Endothelial cell of umbilical vein (primary cell): ENCODE measurements at regions of chr17 and their contacts with region 1.

Region 1: DNA sequence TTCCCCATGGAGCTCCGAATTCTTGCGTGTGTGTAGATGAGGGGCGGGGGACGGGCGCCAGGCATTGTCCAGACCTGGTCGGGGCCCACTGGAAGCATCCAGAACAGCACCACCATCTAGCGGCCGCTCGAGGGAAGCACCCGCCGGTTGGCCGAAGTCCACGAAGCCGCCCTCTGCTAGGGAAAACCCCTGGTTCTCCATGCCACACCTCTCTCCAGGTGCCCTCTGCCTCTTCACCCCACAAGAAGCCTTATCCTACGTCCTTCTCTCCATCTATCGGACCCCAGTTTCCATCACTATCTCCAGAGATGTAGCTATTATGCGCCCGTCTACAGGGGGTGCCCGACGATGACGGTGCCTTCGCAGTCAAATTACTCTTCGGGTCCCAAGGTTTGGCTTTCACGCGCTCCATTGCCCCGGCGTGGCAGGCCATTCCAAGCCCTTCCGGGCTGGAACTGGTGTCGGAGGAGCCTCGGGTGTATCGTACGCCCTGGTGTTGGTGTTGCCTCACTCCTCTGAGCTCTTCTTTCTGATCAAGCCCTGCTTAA is 617 bp upstream of the SENP3 start:
- DNase-seq: peak; percentile 86
- H3K4me3 ChIP-seq: peak overlapping the region; percentile 58 to 80 (median 62)
- H3K27ac ChIP-seq: peak overlapping the region; percentile 60
- H3K4me1 ChIP-seq: peaks cover 36% of the 10 kb centered on the region
- H3K27me3 ChIP-seq: no peaks in the 10 kb centered on the region
- CTCF ChIP-seq: peak; percentile 82 to 96
- POLR2A ChIP-seq: no peak

Region 2: GRCh38 chr17:7351665-7352501 is 209.2 kb before region 1 on chr17 and contains the start of gene KCTD11:
- CTCF ChIA-PET with region 1: interaction called, 48 read pairs
- POLR2A ChIA-PET with region 1: no interaction called
- dilution Hi-C with region 1: no loop called
- intact Hi-C with region 1: loop called (anchors 1 kb)
- DNase-seq: peak; percentile 76
- H3K4me3 ChIP-seq: peak within 1 kb of the TSS; percentile 54 to 78 (median 70)
- H3K27ac ChIP-seq: peak within 1 kb of the TSS; percentile 78
- H3K4me1 ChIP-seq: peaks cover 17% of the 10 kb centered on the region
- H3K27me3 ChIP-seq: no peaks in the 10 kb centered on the region
- CTCF ChIP-seq: peak in 1 of 2 donors; percentile 69
- POLR2A ChIP-seq: peak; percentile 57
- total RNA-seq, gene KCTD11: 3.5 and 3.8 TPM in 2 replicates

Region 3: DNA sequence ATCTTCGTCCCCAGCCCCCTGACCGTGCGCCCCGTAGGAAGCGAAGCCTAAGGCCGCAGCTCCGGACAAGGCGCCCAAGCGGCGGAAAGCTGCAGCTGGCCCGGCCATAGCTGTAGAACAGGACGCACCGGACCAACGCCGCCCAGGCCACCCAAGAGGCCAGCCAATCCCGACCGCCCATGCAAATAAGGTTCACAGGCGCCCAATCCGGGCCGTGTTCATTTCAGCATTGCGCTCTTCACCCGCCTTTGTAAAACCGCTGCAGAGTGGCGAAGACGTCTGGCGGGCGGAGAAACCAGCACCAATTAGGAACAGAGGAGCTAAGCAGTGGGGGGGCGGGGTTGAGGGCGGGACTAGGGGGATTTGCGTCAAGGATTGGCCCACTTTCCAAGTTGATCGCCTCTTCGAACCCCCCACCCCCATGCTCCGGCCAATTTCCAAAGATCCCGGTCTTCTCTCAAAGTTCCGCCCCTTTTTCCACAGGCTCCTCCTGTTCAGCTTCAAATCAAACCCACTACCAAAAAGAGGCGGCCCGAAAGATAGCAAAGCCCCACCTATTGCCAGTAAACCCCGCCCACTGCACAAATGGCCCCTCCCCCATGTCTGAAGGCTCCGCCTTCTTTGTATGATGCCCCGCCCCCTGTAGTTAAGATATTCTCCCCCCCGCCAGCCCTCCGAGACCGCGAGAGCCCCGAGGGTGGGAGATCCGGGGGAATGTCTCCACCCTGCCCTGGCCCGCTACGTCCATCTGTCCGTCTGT is 156.9 kb before region 1 on chr17 and contains the start of gene TMEM256:
- CTCF ChIA-PET with region 1: interaction called, 4 read pairs
- POLR2A ChIA-PET with region 1: interaction called, 14 read pairs
- dilution Hi-C with region 1: no loop called
- intact Hi-C with region 1: loop called (anchors 2 kb)
- DNase-seq: peak; percentile 99
- H3K4me3 ChIP-seq: peak within 1 kb of the TSS; percentile 43 to 61 (median 52)
- H3K27ac ChIP-seq: peak within 1 kb of the TSS; percentile 21
- H3K4me1 ChIP-seq: peaks cover 12% of the 10 kb centered on the region
- H3K27me3 ChIP-seq: no peaks in the 10 kb centered on the region
- CTCF ChIP-seq: peak in 1 of 2 donors; percentile 2
- POLR2A ChIP-seq: peak; percentile 93
- total RNA-seq, gene TMEM256: 57.3 and 67.4 TPM in 2 replicates

Region 4: GRCh38 chr17:7484067-7484918 is 76.8 kb before region 1 on chr17 and contains the start of gene POLR2A:
- CTCF ChIA-PET with region 1: interaction called, 5 read pairs
- POLR2A ChIA-PET with region 1: interaction called, 7 read pairs
- dilution Hi-C with region 1: no loop called
- intact Hi-C with region 1: loop called (anchors 1 kb)
- DNase-seq: peak; percentile 99
- H3K4me3 ChIP-seq: peak within 1 kb of the TSS; percentile 45 to 88 (median 76)
- H3K27ac ChIP-seq: peak within 1 kb of the TSS; percentile 100
- H3K4me1 ChIP-seq: peaks cover 28% of the 10 kb centered on the region
- H3K27me3 ChIP-seq: no peaks in the 10 kb centered on the region
- CTCF ChIP-seq: no peak
- POLR2A ChIP-seq: peak; percentile 100
- total RNA-seq, gene POLR2A: 145 and 151 TPM in 2 replicates

Region 5: DNA sequence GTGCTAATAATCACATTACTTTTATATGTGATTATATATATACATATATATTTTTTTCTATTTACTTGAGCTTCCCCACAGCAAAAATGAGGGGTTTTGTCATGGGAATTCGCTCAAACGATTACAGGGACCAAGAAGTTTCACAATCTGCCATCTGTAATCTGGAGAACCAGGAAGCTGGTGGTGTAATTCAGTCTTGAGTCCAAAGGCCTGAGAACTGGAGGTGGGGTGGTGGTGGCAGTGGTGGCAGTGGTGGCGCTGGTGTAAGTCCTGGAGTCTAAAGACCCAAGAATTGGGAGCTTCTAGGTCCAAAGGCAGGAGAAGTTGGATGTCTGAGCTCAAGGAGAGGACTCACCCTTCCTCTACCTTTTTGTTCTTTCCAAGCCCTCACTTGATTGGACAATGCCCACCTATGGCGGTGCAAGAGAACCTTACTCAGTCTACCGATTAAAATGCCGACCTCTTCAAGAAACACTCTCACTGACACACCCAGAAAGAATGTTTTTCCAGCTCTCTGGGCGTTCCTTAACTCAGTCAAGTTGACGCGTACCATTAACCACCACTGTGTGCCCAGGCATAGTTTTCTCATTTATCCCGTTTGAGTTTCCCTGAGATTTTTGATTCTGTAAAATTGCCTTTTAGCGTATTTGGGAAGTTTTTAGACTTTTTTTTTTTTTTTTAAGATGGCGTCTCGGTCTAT is 45.0 kb before region 1 on chr17:
- CTCF ChIA-PET with region 1: interaction called, 314 read pairs
- POLR2A ChIA-PET with region 1: interaction called, 3 read pairs
- dilution Hi-C with region 1: no loop called
- intact Hi-C with region 1: loop called (anchors 1 kb)
- DNase-seq: no peak
- H3K4me3 ChIP-seq: no peak overlapping the region
- H3K27ac ChIP-seq: no peak overlapping the region
- H3K4me1 ChIP-seq: no peaks in the 10 kb centered on the region
- H3K27me3 ChIP-seq: no peaks in the 10 kb centered on the region
- CTCF ChIP-seq: no peak
- POLR2A ChIP-seq: no peak

Region 6: DNA sequence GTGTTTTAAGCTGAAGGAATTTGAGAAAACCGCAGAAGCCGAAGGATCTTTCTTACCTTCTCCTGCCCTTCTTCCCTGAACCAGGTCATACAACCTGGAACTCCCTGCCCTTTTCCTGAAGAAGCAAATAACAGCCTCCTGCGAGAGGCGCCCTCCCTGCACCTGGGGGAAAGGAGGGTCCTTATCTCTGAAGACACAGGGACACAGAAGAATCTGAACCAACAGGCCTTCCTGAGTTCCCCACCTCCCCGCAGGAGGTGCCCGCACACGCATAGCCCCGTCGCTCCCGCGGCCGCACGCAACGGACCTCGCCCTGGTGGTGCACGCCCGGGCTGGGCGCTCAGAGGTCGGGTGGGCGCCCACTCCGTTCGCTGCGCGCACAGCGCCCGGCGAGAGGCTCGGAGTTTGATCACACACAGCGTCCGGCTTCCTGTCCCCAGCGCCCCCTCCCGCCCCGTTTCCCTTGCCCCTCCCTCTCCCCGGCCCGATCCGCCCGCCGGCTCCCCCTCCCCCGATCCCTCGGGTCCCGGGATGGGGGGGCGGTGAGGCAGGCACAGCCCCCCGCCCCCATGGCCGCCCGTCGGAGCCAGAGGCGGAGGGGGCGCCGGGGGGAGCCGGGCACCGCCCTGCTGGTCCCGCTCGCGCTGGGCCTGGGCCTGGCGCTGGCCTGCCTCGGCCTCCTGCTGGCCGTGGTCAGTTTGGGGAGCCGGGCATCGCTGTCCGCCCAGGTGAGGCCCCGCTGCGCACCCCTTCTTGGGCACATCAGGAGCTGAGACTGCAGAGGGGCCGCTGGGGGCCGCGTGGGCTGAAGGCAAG is 12.3 kb before region 1 on chr17 and contains the start of gene TNFSF12:
- CTCF ChIA-PET with region 1: interaction called, 20 read pairs
- POLR2A ChIA-PET with region 1: interaction called, 4 read pairs
- dilution Hi-C with region 1: no loop called
- intact Hi-C with region 1: no loop called
- DNase-seq: peak; percentile 40
- H3K4me3 ChIP-seq: peak within 1 kb of the TSS; percentile 24 to 60 (median 40)
- H3K27ac ChIP-seq: no peak within 1 kb of the TSS
- H3K4me1 ChIP-seq: peaks cover 10% of the 10 kb centered on the region
- H3K27me3 ChIP-seq: no peaks in the 10 kb centered on the region
- CTCF ChIP-seq: peak in 1 of 2 donors; percentile 31
- POLR2A ChIP-seq: peak; percentile 72
- total RNA-seq, gene TNFSF12: 21.0 and 28.4 TPM in 2 replicates

Region 7: DNA sequence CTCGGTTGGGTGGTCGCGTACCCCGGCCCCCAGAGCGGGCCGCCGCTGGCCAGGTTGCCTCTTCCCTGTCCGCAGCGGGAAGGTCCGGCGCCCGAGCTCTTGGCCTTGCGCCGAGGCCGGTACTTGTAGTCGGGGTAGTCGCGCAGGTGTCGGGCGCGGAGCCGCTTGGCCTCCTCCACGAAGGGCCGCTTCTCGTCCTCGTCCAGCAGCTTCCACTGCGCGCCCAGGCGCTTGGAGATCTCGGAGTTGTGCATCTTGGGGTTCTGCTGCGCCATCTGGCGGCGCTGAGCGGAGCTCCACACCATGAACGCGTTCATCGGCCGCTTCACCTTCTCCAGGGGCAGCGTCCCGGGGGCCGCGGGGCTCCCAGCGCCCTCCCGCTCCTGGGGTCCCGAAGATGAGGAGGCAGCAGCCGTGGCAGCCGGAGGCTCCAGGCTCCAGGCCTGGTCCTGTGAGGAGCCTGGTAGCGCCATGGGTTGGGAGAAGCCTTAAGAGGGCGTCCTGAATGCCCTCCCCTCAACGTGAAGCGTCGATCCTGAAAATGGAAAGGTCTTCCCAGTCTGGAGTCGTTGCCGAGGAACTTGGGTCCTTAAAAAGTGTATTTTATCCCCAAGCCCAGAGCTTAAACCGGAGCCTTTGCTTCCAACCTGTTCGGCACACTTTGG is 28.2 kb after region 1 on chr17:
- CTCF ChIA-PET with region 1: interaction called, 61 read pairs
- POLR2A ChIA-PET with region 1: no interaction called
- dilution Hi-C with region 1: no loop called
- intact Hi-C with region 1: loop called (anchors 1 kb)
- DNase-seq: peak; percentile 78
- H3K4me3 ChIP-seq: no peak overlapping the region
- H3K27ac ChIP-seq: no peak overlapping the region
- H3K4me1 ChIP-seq: peaks cover 16% of the 10 kb centered on the region
- H3K27me3 ChIP-seq: no peaks in the 10 kb centered on the region
- CTCF ChIP-seq: peak; percentile 94 to 95
- POLR2A ChIP-seq: no peak

Region 8: GRCh38 chr17:7774037-7774659 is 213.0 kb after region 1 on chr17:
- CTCF ChIA-PET with region 1: no interaction called
- POLR2A ChIA-PET with region 1: no interaction called
- dilution Hi-C with region 1: no loop called
- intact Hi-C with region 1: no loop called
- DNase-seq: no peak
- H3K4me3 ChIP-seq: no peak overlapping the region
- H3K27ac ChIP-seq: no peak overlapping the region
- H3K4me1 ChIP-seq: no peaks in the 10 kb centered on the region
- H3K27me3 ChIP-seq: peaks cover 0 to 8% of the 10 kb centered on the region in 2 experiments
- CTCF ChIP-seq: no peak
- POLR2A ChIP-seq: no peak